ENCODE measurements at regions of chr17 and their contacts with region 1.

Region 1: DNA sequence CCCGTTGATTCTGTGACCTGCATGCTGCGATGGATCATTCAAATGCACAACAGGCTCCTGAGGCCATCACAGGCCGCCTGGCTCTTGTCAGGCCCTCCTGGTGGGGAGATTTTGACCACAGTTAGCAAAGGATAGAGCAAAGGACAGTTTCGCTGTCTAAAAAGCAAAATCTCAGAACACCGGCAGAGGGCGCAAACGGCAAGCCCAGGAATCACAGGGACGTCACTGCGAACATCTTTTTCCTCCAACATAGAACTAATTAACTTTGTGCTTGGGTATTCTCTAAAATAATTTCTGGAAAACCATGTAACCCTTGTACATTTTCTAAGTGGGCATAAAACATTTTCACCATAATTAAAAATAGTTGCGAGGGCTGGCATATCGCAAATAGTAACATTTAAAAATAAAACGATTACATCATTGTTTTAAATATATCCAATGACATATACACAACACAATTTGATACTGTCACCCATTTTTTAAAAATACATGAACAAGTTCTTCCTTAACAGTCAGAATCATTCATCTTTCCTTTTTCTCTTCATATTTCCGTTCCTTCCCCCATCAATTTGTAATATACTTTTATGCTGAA is 19.7 kb upstream of the SLC47A1 start:
- DNase-seq: peak; percentile 82
- ATAC-seq: peak; percentile 69
- H3K4me3 Mint-ChIP-seq: no peak overlapping the region
- H3K27ac Mint-ChIP-seq: no peak overlapping the region
- H3K4me1 Mint-ChIP-seq: no peaks in the 10 kb centered on the region
- H3K27me3 Mint-ChIP-seq: peaks cover 3% of the 10 kb centered on the region

Region 2: GRCh38 chr17:19317359-19318095 is 196.5 kb before region 1 on chr17:
- CTCF ChIA-PET with region 1: no interaction called
- POLR2A ChIA-PET with region 1: no interaction called
- intact Hi-C with region 1: no loop called
- DNase-seq: peak; percentile 18
- ATAC-seq: no peak
- H3K4me3 Mint-ChIP-seq: no peak overlapping the region
- H3K27ac Mint-ChIP-seq: no peak overlapping the region
- H3K4me1 Mint-ChIP-seq: no peaks in the 10 kb centered on the region
- H3K27me3 Mint-ChIP-seq: peaks cover 6% of the 10 kb centered on the region

Region 3: GRCh38 chr17:19579867-19580565 is 66.0 kb after region 1 on chr17:
- CTCF ChIA-PET with region 1: interaction called, 6 read pairs
- POLR2A ChIA-PET with region 1: no interaction called
- intact Hi-C with region 1: loop called in 1 of 2 experiments (anchors 5 kb)
- DNase-seq: peak; percentile 6
- ATAC-seq: no peak
- H3K4me3 Mint-ChIP-seq: no peak overlapping the region
- H3K27ac Mint-ChIP-seq: no peak overlapping the region
- H3K4me1 Mint-ChIP-seq: peaks cover 2% of the 10 kb centered on the region
- H3K27me3 Mint-ChIP-seq: peaks cover 18% of the 10 kb centered on the region

Region 4: GRCh38 chr17:19648475-19649406 is 134.7 kb after region 1 on chr17 and contains the start of gene ALDH3A2:
- CTCF ChIA-PET with region 1: interaction called, 18 read pairs
- POLR2A ChIA-PET with region 1: no interaction called
- intact Hi-C with region 1: loop called (anchors 1 kb)
- DNase-seq: peak; percentile 97
- ATAC-seq: peak; percentile 94
- H3K4me3 Mint-ChIP-seq: peak within 1 kb of the TSS; percentile 79
- H3K27ac Mint-ChIP-seq: peak within 1 kb of the TSS; percentile 87
- H3K4me1 Mint-ChIP-seq: peaks cover 38% of the 10 kb centered on the region
- H3K27me3 Mint-ChIP-seq: peaks cover 1% of the 10 kb centered on the region
- total RNA-seq, gene ALDH3A2: 18.5 to 23.9 TPM